ENCODE measurements at regions of chr12 and their contacts with region 1.

Region 1: GRCh38 chr12:25436203-25437030 is 116.7 kb downstream of the LMNTD1 start:
- DNase-seq: peak; percentile 72
- ATAC-seq: peak; percentile 71
- H3K4me3 ChIP-seq: no peak overlapping the region
- H3K4me3 Mint-ChIP-seq: no peak overlapping the region
- H3K27ac ChIP-seq: no peak overlapping the region
- H3K27ac Mint-ChIP-seq: no peak overlapping the region
- H3K4me1 ChIP-seq: no peaks in the 10 kb centered on the region
- H3K4me1 Mint-ChIP-seq: peaks cover 4% of the 10 kb centered on the region
- H3K27me3 ChIP-seq: no peaks in the 10 kb centered on the region
- H3K27me3 Mint-ChIP-seq: peaks cover 5% of the 10 kb centered on the region
- CTCF ChIP-seq: peak; percentile 94

Region 2: DNA sequence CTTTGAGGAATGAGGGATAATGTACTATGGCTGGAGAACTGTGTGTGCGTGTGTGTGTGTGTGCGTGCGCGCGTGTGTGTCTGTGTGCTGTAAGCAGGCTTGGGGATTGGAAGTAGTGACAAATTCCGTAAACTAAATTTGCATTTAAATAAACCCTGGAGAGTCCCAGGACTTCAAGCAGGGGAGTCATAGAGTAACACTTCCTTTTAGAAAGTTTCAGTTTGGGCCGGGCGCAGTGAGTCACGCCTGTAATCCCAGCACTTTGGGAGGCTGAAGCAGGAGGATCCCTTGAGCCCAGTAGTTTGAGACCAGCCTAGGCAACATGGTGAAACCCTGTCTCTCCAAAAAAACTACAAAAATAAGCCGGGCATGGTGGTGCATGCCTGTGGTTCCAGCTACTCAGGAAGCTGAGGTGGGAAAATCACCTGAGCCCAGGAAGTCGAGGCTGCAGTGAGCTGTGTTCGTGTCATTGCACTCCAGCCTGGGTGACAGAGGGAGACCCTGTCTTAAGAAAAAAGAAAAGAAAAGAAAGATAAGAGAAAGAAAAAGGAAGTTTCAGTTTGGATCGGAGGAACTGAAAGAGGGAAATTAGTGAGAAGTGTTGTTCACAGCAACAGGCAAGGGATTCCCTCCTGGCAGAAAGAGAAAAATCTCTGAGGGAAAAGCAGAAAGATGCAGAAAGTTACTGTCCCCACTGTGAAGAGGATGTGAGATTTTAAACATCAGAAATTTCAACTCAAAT is 1264.2 kb before region 1 on chr12:
- CTCF ChIA-PET with region 1: no interaction called
- POLR2A ChIA-PET with region 1: no interaction called
- intact Hi-C with region 1: no loop called
- DNase-seq: peak; percentile 25
- ATAC-seq: peak; percentile 39
- H3K4me3 ChIP-seq: peak overlapping the region in 1 of 5 experiments; percentile 16
- H3K4me3 Mint-ChIP-seq: peak overlapping the region; percentile 76
- H3K27ac ChIP-seq: peak overlapping the region in 1 of 2 donors; percentile 9
- H3K27ac Mint-ChIP-seq: peak overlapping the region; percentile 81
- H3K4me1 ChIP-seq: peaks cover 8 to 12% of the 10 kb centered on the region in 2 donors
- H3K4me1 Mint-ChIP-seq: peaks cover 15% of the 10 kb centered on the region
- H3K27me3 ChIP-seq: no peaks in the 10 kb centered on the region
- H3K27me3 Mint-ChIP-seq: no peaks in the 10 kb centered on the region
- CTCF ChIP-seq: no peak

Region 3: DNA sequence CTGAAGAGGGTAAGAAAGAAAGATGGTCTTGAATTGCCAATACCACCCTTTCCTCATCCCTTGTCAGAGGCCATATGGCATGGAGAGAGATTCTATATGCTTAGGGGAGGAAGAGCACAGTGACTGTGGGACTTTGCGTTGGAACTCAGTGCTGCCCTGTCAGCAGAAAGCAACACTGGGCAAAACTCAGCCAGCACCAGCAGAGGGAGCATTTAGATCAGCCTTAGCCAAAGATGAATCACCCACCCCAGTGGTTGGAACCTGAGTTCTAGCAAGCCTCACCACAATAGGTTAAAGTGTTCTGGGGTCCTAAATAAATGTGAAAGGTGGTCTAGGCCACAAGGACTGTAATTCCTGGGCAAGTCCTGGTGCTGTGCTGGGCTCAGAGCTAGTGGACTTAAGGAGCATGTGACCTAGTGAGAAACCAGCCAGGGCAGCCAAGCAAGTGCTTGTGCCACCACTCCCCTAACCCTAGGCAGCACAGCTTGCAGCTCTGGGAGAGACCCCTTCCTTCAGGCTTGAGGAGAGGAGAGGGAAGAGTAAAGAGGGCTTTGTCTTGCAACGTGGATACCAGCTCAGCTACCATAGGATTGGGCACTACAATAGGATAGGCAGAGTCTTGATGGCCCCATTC is 476.1 kb before region 1 on chr12:
- CTCF ChIA-PET with region 1: no interaction called
- POLR2A ChIA-PET with region 1: no interaction called
- intact Hi-C with region 1: no loop called
- DNase-seq: peak; percentile 45
- ATAC-seq: peak; percentile 62
- H3K4me3 ChIP-seq: no peak overlapping the region
- H3K4me3 Mint-ChIP-seq: no peak overlapping the region
- H3K27ac ChIP-seq: no peak overlapping the region
- H3K27ac Mint-ChIP-seq: no peak overlapping the region
- H3K4me1 ChIP-seq: no peaks in the 10 kb centered on the region
- H3K4me1 Mint-ChIP-seq: peaks cover 2% of the 10 kb centered on the region
- H3K27me3 ChIP-seq: no peaks in the 10 kb centered on the region
- H3K27me3 Mint-ChIP-seq: no peaks in the 10 kb centered on the region
- CTCF ChIP-seq: peak; percentile 47

Region 4: DNA sequence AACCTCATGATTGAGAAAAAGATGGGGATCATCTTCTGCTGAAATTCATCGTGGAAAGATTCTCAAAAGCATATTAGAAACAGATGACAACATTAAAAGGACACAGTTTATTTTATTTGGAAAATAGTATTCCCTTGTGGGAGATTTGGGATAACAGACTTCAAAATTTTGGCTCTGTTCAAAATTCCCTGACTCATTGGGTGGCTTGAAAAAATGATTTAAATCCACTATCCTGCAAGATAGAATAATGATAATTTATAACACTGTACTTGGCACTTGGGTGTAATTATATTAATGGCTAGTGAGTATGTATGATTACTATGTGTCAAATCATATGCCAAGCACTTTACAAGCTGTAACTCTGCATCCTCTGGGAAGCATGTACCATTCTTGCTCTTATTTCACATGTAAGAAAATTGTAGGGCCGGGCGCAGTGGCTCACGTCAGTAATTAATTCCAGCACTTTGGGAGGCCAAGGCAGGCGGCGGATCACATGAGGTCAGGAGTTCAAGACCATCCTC is 12.1 kb before region 1 on chr12:
- CTCF ChIA-PET with region 1: interaction called, 39 read pairs
- POLR2A ChIA-PET with region 1: no interaction called
- intact Hi-C with region 1: no loop called
- DNase-seq: no peak
- ATAC-seq: no peak
- H3K4me3 ChIP-seq: no peak overlapping the region
- H3K4me3 Mint-ChIP-seq: no peak overlapping the region
- H3K27ac ChIP-seq: no peak overlapping the region
- H3K27ac Mint-ChIP-seq: no peak overlapping the region
- H3K4me1 ChIP-seq: no peaks in the 10 kb centered on the region
- H3K4me1 Mint-ChIP-seq: no peaks in the 10 kb centered on the region
- H3K27me3 ChIP-seq: no peaks in the 10 kb centered on the region
- H3K27me3 Mint-ChIP-seq: no peaks in the 10 kb centered on the region
- CTCF ChIP-seq: no peak

Region 5: GRCh38 chr12:26017484-26018206 is 581.2 kb after region 1 on chr12:
- CTCF ChIA-PET with region 1: interaction called, 9 read pairs
- POLR2A ChIA-PET with region 1: no interaction called
- intact Hi-C with region 1: loop called (anchors 1 kb)
- DNase-seq: peak; percentile 20
- ATAC-seq: no peak
- H3K4me3 ChIP-seq: no peak overlapping the region
- H3K4me3 Mint-ChIP-seq: no peak overlapping the region
- H3K27ac ChIP-seq: no peak overlapping the region
- H3K27ac Mint-ChIP-seq: no peak overlapping the region
- H3K4me1 ChIP-seq: no peaks in the 10 kb centered on the region
- H3K4me1 Mint-ChIP-seq: no peaks in the 10 kb centered on the region
- H3K27me3 ChIP-seq: peaks cover 0 to 7% (median 0%) of the 10 kb centered on the region in 4 experiments
- H3K27me3 Mint-ChIP-seq: peaks cover 25% of the 10 kb centered on the region
- CTCF ChIP-seq: peak; percentile 25

Region 6: GRCh38 chr12:26028953-26029735 is 592.7 kb after region 1 on chr12:
- CTCF ChIA-PET with region 1: interaction called, 38 read pairs
- POLR2A ChIA-PET with region 1: no interaction called
- intact Hi-C with region 1: loop called (anchors 1 kb)
- DNase-seq: peak; percentile 48
- ATAC-seq: peak; percentile 31
- H3K4me3 ChIP-seq: no peak overlapping the region
- H3K4me3 Mint-ChIP-seq: no peak overlapping the region
- H3K27ac ChIP-seq: no peak overlapping the region
- H3K27ac Mint-ChIP-seq: no peak overlapping the region
- H3K4me1 ChIP-seq: no peaks in the 10 kb centered on the region
- H3K4me1 Mint-ChIP-seq: no peaks in the 10 kb centered on the region
- H3K27me3 ChIP-seq: no peaks in the 10 kb centered on the region
- H3K27me3 Mint-ChIP-seq: no peaks in the 10 kb centered on the region
- CTCF ChIP-seq: peak; percentile 83

Region 7: DNA sequence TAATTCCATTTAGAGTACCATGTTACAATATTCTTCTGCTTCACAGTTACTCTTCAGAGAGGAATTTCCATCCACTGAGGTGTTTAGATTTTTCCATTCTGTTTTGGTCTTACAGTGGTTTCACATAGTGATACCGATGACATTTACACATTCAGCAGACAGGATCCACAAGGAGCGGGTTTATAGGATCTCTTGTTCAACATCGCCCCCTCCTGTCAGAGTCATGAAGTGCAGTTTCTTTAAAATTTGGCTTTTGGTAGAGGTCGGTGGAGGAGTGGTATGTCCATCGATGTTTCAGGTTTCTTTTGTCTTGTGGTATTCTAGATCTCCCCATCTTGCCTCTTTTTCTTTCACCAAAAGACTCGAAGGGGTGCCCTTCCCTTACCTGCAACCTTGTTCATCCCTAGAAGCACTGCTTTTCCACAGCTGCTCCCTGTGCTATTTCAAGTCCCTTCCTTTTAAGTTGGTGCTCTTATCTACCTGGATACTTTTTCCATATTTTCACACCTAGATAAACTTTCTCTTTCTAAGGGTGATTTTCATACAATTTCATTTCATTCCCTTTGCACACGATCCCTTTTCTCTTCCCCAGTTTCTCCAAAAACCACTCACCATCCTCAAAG is 1215.3 kb after region 1 on chr12:
- CTCF ChIA-PET with region 1: interaction called, 9 read pairs
- POLR2A ChIA-PET with region 1: no interaction called
- intact Hi-C with region 1: loop called (anchors 1 kb)
- DNase-seq: peak; percentile 64
- ATAC-seq: peak; percentile 57
- H3K4me3 ChIP-seq: no peak overlapping the region
- H3K4me3 Mint-ChIP-seq: no peak overlapping the region
- H3K27ac ChIP-seq: no peak overlapping the region
- H3K27ac Mint-ChIP-seq: no peak overlapping the region
- H3K4me1 ChIP-seq: no peaks in the 10 kb centered on the region
- H3K4me1 Mint-ChIP-seq: no peaks in the 10 kb centered on the region
- H3K27me3 ChIP-seq: no peaks in the 10 kb centered on the region
- H3K27me3 Mint-ChIP-seq: no peaks in the 10 kb centered on the region
- CTCF ChIP-seq: peak; percentile 85

Region 8: DNA sequence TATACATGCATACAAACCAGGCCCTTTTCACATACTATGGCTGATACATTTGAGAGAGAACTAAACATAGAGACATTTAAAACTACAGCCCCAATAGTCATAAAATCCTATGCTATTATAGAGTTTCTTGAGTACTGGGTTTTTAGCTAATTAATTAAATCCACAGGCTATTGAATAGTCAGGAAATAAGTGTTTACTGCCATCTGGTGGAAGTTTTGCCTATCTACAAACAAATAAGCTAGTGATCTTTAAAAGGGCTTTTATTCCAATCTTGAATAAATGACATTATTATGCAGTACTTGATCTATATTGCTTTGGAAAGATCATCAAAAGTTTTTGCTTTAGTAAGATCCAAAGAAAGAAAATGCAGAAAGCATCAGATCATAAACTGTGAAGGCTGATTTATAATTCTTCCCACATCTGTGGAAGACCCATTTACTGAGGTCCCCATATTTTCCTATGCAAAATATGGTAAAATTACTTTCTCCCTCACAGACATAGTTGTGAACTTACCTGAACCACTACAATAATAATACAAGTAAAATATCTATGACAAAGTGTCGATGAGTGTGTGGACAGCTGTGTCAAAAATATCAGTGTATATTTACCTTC is 1265.3 kb after region 1 on chr12:
- CTCF ChIA-PET with region 1: interaction called, 5 read pairs
- POLR2A ChIA-PET with region 1: no interaction called
- intact Hi-C with region 1: loop called (anchors 1 kb)
- DNase-seq: peak; percentile 55
- ATAC-seq: no peak
- H3K4me3 ChIP-seq: no peak overlapping the region
- H3K4me3 Mint-ChIP-seq: no peak overlapping the region
- H3K27ac ChIP-seq: no peak overlapping the region
- H3K27ac Mint-ChIP-seq: no peak overlapping the region
- H3K4me1 ChIP-seq: peaks cover 11 to 14% of the 10 kb centered on the region in 2 donors
- H3K4me1 Mint-ChIP-seq: peaks cover 9% of the 10 kb centered on the region
- H3K27me3 ChIP-seq: no peaks in the 10 kb centered on the region
- H3K27me3 Mint-ChIP-seq: no peaks in the 10 kb centered on the region
- CTCF ChIP-seq: peak; percentile 87

Region 9: DNA sequence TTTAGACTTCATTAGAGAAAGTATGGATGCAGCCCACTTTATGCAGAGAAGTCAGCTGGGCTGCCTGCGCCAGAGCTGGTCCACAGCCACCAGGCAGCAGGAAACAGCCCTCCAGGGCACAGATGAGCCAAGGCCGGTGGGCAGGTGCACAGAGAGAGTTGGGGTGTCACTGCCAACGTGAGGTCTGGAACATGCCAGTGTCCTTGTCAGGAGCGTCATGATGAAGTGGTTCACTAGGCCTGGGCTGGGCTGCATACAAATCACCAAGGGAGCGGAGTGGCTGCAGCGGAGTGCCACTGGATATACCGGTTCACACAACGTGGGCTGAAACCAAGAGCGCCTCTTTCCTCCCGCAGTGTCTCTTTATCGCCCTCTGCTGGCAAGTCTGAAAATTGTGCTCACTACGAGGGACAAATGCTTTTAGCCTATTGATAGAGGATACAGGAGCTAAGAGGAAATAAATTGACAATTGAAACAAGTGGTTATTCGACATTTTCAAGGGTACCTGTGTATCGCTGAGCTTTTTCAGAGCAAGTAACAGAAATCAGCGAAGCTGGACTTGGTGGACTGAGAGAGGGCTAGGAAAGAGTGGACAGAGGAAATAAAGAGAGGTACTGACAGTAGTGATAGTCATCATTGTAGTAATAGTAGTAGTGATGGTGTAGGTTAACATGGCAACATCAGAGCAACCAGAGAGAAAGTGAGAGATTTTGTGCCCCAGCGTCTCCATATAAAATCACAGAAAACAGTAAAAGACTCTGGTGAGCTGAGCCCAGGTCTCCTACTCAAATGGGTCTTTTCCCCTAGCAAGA is 1448.6 kb after region 1 on chr12:
- CTCF ChIA-PET with region 1: no interaction called
- POLR2A ChIA-PET with region 1: no interaction called
- intact Hi-C with region 1: loop called (anchors 1 kb)
- DNase-seq: peak; percentile 89
- ATAC-seq: peak; percentile 96
- H3K4me3 ChIP-seq: peak overlapping the region in 2 of 5 experiments; percentile 3 to 26
- H3K4me3 Mint-ChIP-seq: peak overlapping the region; percentile 67
- H3K27ac ChIP-seq: no peak overlapping the region
- H3K27ac Mint-ChIP-seq: no peak overlapping the region
- H3K4me1 ChIP-seq: peaks cover 4 to 8% of the 10 kb centered on the region in 2 donors
- H3K4me1 Mint-ChIP-seq: peaks cover 9% of the 10 kb centered on the region
- H3K27me3 ChIP-seq: no peaks in the 10 kb centered on the region
- H3K27me3 Mint-ChIP-seq: no peaks in the 10 kb centered on the region
- CTCF ChIP-seq: peak; percentile 97

Measured in B cell (primary cell).